Naive thymus-derived CD4-positive, alpha-beta T cell (primary cell): ENCODE measurements at regions of chr7 and their contacts with region 1.

Region 1: GRCh38 chr7:30284298-30285066 is at the start of gene ZNRF2:
- DNase-seq: peak; percentile 93 to 99 (median 98)
- ATAC-seq: peak; percentile 92
- H3K4me3 ChIP-seq: peak within 1 kb of the TSS; percentile 58
- H3K4me3 Mint-ChIP-seq: peak within 1 kb of the TSS; percentile 83 to 99 (median 86)
- H3K27ac ChIP-seq: peak within 1 kb of the TSS; percentile 83
- H3K27ac Mint-ChIP-seq: peak within 1 kb of the TSS; percentile 83 to 94 (median 92)
- H3K4me1 ChIP-seq: peaks cover 3 to 23% of the 10 kb centered on the region in 2 donors
- H3K4me1 Mint-ChIP-seq: peaks cover 33 to 49% (median 43%) of the 10 kb centered on the region in 7 donors
- H3K27me3 ChIP-seq: no peaks in the 10 kb centered on the region
- H3K27me3 Mint-ChIP-seq: peaks cover 0 to 2% (median 0%) of the 10 kb centered on the region in 5 donors
- total RNA-seq, gene ZNRF2: 13.7 to 28.0 (median 24.4) TPM

Region 2: GRCh38 chr7:30134611-30135545 is 149.6 kb before region 1 on chr7 and contains the start of gene MTURN:
- CTCF ChIA-PET with region 1: no interaction called
- POLR2A ChIA-PET with region 1: no interaction called
- intact Hi-C with region 1: loop called (anchors 1 to 2 kb)
- DNase-seq: peak; percentile 80 to 91 (median 88)
- ATAC-seq: peak; percentile 89
- H3K4me3 ChIP-seq: peak within 1 kb of the TSS; percentile 86
- H3K4me3 Mint-ChIP-seq: peak within 1 kb of the TSS; percentile 87 to 95 (median 92)
- H3K27ac ChIP-seq: peak within 1 kb of the TSS; percentile 77
- H3K27ac Mint-ChIP-seq: peak within 1 kb of the TSS; percentile 65 to 95 (median 91)
- H3K4me1 ChIP-seq: peaks cover 0 to 8% of the 10 kb centered on the region in 2 donors
- H3K4me1 Mint-ChIP-seq: peaks cover 0 to 16% (median 6%) of the 10 kb centered on the region in 7 donors
- H3K27me3 ChIP-seq: no peaks in the 10 kb centered on the region
- H3K27me3 Mint-ChIP-seq: peaks cover 0 to 47% (median 0%) of the 10 kb centered on the region in 5 donors
- total RNA-seq, gene MTURN: 2.7 to 38.7 (median 20.2) TPM

Region 3: GRCh38 chr7:30268586-30268985 is 15.9 kb before region 1 on chr7:
- CTCF ChIA-PET with region 1: no interaction called
- POLR2A ChIA-PET with region 1: no interaction called
- intact Hi-C with region 1: no loop called
- DNase-seq: no peak
- ATAC-seq: no peak
- H3K4me3 ChIP-seq: no peak overlapping the region
- H3K4me3 Mint-ChIP-seq: no peak overlapping the region
- H3K27ac ChIP-seq: no peak overlapping the region
- H3K27ac Mint-ChIP-seq: no peak overlapping the region
- H3K4me1 ChIP-seq: no peaks in the 10 kb centered on the region
- H3K4me1 Mint-ChIP-seq: no peaks in the 10 kb centered on the region
- H3K27me3 ChIP-seq: no peaks in the 10 kb centered on the region
- H3K27me3 Mint-ChIP-seq: peaks cover 0 to 6% (median 4%) of the 10 kb centered on the region in 5 donors

Region 4: DNA sequence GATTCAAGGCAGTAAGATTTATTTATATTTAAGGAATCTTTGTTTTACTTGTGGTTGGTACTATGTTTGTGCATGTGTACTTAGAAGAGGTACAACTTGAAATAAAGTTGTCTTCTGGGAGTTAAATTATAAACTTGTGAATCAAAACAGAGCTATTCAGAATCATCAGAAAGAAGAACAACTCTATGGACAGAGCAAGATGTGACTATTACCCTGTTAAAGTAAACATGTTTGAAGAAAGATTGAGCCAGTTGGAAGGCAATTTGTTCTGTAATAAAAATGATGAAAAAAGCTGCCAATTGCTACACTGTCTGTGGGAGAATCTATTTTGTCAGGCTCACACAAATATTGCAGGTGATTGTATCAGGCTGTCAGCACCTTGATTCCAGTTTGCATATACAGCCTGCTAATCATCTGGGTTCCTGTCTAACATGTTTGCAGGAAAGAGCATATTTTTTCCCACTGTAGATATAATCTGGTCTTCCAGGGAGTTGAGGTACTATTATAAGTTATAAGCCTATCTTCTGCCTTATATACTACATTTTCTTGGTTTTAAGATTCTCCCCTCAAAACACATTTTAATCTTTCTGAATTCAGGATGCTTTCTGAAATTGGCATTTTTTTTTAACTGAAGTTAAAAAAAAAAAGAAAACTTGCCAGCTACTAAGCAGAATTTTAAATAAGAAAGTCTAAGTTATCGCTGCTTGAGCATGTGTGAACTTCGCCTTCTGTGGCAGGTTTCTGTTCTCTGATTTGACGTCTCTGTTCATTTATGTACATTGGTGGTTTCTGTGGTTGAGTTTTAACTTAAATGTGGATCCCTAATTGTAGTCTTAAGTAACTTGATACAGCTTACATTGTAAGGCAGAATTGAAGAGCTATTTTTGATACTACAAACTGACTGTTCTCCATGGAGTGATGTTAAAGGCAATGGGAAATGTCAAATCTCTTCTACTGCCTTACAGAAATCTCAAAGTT is 45.9 kb after region 1 on chr7:
- CTCF ChIA-PET with region 1: interaction called, 3 read pairs
- POLR2A ChIA-PET with region 1: interaction called, 4 read pairs
- intact Hi-C with region 1: loop called in 1 of 2 experiments (anchors 2 kb)
- DNase-seq: peak in 7 of 9 donors; percentile 38 to 73 (median 62)
- ATAC-seq: peak; percentile 95
- H3K4me3 ChIP-seq: no peak overlapping the region
- H3K4me3 Mint-ChIP-seq: peak overlapping the region; percentile 9 to 82 (median 73)
- H3K27ac ChIP-seq: peak overlapping the region; percentile 11
- H3K27ac Mint-ChIP-seq: peak overlapping the region; percentile 33 to 86 (median 68)
- H3K4me1 ChIP-seq: peaks cover 21% of the 10 kb centered on the region in 2 donors
- H3K4me1 Mint-ChIP-seq: peaks cover 35 to 69% (median 57%) of the 10 kb centered on the region in 7 donors
- H3K27me3 ChIP-seq: no peaks in the 10 kb centered on the region
- H3K27me3 Mint-ChIP-seq: peaks cover 0 to 2% (median 0%) of the 10 kb centered on the region in 5 donors

Region 5: DNA sequence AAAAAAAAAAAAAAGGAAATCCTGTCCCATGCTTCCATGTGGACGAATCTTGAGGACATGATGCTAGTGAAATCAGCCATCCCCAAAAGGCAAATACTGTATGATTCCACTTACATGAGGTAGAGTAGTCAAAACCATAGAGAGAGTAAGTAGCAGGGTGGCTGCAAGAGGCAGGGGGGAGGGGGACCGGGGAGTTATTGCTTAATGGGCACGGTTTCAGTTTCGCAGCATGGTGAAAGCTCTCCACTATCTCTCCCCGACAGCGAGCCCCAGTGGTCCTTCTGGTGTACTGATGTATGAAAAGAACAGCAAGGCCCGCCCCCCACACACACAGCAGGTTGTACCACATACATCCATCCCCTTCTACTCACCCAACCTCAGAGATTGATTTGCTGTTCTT is 161.3 kb after region 1 on chr7:
- CTCF ChIA-PET with region 1: no interaction called
- POLR2A ChIA-PET with region 1: interaction called, 3 read pairs
- intact Hi-C with region 1: loop called in 1 of 2 experiments (anchors 10 kb)
- DNase-seq: peak; percentile 22 to 77 (median 47)
- ATAC-seq: peak; percentile 98
- H3K4me3 ChIP-seq: no peak overlapping the region
- H3K4me3 Mint-ChIP-seq: peak overlapping the region in 1 of 10 donors; percentile 49
- H3K27ac ChIP-seq: no peak overlapping the region
- H3K27ac Mint-ChIP-seq: peak overlapping the region in 5 of 9 donors; percentile 13 to 62 (median 51)
- H3K4me1 ChIP-seq: peaks cover 0 to 6% of the 10 kb centered on the region in 2 donors
- H3K4me1 Mint-ChIP-seq: peaks cover 0 to 9% (median 5%) of the 10 kb centered on the region in 7 donors
- H3K27me3 ChIP-seq: no peaks in the 10 kb centered on the region
- H3K27me3 Mint-ChIP-seq: no peaks in the 10 kb centered on the region

Region 6: DNA sequence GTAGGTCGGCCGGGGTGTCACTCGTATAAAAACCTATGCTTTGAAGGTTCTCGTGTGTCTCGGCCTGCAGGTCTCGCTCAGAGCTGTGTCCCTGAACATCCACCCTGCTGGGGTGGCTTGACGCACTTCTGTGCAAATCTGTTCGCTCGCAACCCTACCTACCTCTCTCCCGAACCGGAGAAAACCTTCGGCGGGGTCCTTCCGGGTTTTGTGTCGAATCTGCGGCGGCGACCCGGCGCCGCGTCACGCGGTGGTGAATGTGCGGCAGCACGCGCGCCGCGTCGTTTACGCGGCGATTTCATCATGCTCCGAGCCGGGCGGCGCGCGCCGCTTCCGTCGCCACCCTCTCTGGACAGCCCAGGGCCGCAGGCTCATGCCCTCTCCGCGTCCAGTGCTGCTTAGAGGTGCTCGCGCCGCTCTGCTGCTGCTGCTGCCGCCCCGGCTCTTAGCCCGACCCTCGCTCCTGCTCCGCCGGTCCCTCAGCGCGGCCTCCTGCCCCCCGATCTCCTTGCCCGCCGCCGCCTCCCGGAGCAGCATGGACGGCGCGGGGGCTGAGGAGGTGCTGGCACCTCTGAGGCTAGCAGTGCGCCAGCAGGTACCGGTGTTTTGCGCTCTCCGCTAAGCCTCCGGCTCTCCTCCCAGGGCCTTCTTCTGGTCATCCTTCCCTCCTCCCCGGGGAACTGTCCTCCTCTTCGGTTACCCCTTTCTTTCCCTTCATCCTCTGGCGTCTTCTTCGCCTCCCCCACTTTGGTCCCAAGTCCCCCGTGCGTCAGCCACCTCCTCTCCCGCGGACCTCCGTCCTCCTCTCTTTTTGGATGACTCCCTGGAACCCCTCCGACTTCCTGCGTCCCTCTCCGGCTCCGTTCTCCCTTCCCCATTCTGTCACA is 310.3 kb after region 1 on chr7 and contains the start of gene GARS1:
- CTCF ChIA-PET with region 1: no interaction called
- POLR2A ChIA-PET with region 1: no interaction called
- intact Hi-C with region 1: loop called (anchors 1 kb)
- DNase-seq: peak; percentile 85 to 92 (median 90)
- ATAC-seq: peak; percentile 91
- H3K4me3 ChIP-seq: peak within 1 kb of the TSS; percentile 62
- H3K4me3 Mint-ChIP-seq: peak within 1 kb of the TSS; percentile 91 to 100 (median 99)
- H3K27ac ChIP-seq: peak within 1 kb of the TSS; percentile 91
- H3K27ac Mint-ChIP-seq: peak within 1 kb of the TSS; percentile 97 to 100 (median 99)
- H3K4me1 ChIP-seq: peaks cover 3 to 22% of the 10 kb centered on the region in 2 donors
- H3K4me1 Mint-ChIP-seq: peaks cover 52 to 88% (median 77%) of the 10 kb centered on the region in 7 donors
- H3K27me3 ChIP-seq: no peaks in the 10 kb centered on the region
- H3K27me3 Mint-ChIP-seq: no peaks in the 10 kb centered on the region
- total RNA-seq, gene GARS1: 73.8 to 143 (median 75.8) TPM

Region 7: DNA sequence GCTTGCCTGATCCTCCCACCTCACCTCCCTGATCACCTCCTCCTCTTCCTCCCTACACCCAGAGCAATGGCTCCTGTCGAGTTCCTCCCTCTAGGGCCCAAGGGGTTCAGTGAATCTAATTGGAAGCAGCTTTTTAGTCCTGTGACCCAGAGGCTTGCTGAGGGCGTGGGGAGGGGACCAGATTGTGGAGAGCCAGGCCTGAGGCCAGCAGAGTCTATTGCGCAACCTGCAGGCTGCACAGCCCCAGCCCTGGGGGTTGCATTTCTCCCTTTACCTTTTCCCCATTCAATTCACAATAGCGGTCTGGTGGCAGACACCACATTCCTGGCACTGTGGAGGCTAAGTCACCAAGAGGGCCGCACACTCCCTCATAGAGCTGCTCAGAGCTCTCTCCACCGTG is 711.8 kb after region 1 on chr7:
- CTCF ChIA-PET with region 1: no interaction called
- POLR2A ChIA-PET with region 1: no interaction called
- intact Hi-C with region 1: no loop called
- DNase-seq: no peak
- ATAC-seq: no peak
- H3K4me3 ChIP-seq: no peak overlapping the region
- H3K4me3 Mint-ChIP-seq: no peak overlapping the region
- H3K27ac ChIP-seq: no peak overlapping the region
- H3K27ac Mint-ChIP-seq: peak overlapping the region in 1 of 9 donors; percentile 55
- H3K4me1 ChIP-seq: no peaks in the 10 kb centered on the region
- H3K4me1 Mint-ChIP-seq: no peaks in the 10 kb centered on the region
- H3K27me3 ChIP-seq: no peaks in the 10 kb centered on the region
- H3K27me3 Mint-ChIP-seq: peaks cover 0 to 8% (median 0%) of the 10 kb centered on the region in 5 donors